HCT116 (cell line): ENCODE measurements at regions of chr10 and their contacts with region 1.

Region 1: GRCh38 chr10:124152916-124153826 is 59.8 kb upstream of the CHST15 start:
- DNase-seq: peak; percentile 100
- ATAC-seq: peak; percentile 80
- H3K4me3 ChIP-seq: peak overlapping the region; percentile 45 to 57
- H3K27ac ChIP-seq: peak overlapping the region; percentile 94
- H3K4me1 ChIP-seq: peaks cover 50 to 66% of the 10 kb centered on the region in 2 experiments
- H3K27me3 ChIP-seq: no peaks in the 10 kb centered on the region
- CTCF ChIP-seq: no peak
- POLR2A ChIP-seq: no peak
- RAD21 ChIP-seq: no peak

Region 2: GRCh38 chr10:123986742-123987141 is 166.4 kb before region 1 on chr10:
- CTCF ChIA-PET with region 1: no interaction called
- POLR2A ChIA-PET with region 1: no interaction called
- RAD21 ChIA-PET with region 1: no interaction called
- intact Hi-C with region 1: no loop called
- DNase-seq: no peak
- ATAC-seq: no peak
- H3K4me3 ChIP-seq: no peak overlapping the region
- H3K27ac ChIP-seq: no peak overlapping the region
- H3K4me1 ChIP-seq: no peaks in the 10 kb centered on the region
- H3K27me3 ChIP-seq: no peaks in the 10 kb centered on the region
- CTCF ChIP-seq: no peak
- POLR2A ChIP-seq: no peak
- RAD21 ChIP-seq: no peak

Region 3: DNA sequence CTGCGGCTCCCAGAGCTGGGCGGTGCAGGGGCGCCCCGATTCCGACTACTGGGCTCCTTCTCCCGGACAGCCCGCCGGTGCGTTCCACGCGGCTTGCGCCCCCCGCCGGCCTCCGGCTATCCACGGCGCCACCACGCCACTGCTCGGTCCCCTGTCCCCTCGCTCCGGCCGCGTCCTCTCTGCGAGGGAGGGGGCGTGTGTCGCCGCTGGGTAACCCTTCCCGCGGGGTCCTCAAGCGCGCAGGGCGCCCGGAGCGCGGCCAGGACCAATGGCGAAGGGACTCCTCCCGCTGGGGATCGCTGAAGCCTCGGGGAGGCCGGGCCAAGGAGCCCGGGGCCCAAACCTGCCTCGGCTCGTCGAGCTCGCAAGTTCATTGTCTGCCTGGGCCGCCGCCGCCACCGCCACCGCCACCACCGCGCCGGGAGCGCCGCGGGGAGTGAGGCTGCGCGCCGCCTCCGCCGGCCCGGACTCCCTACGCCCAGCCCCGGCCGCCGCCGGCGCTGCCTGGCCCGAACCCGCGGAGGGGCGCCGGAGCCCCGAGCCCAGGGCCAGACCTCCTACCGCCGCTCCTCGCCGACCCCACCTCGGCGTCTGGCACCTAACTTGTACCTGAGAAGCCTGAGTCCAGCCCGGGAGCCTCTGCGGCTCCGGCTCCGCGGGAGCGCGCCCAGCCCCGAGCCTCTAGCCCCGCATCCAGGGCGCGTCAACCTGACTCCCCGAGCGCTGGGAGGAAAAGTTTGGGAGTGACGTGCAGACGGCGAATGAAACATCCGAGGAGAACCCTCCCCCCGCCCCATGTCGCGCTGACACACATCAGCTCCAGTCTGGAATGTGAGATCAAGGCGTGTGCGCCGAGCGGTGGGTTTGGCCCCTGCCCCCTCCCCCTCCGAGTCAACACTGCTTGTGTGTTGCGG is 60.1 kb before region 1 on chr10 and contains the start of gene CHST15:
- CTCF ChIA-PET with region 1: interaction called, 4 read pairs
- POLR2A ChIA-PET with region 1: interaction called, 6 read pairs
- RAD21 ChIA-PET with region 1: no interaction called
- intact Hi-C with region 1: loop called (anchors 2 kb)
- DNase-seq: peak; percentile 74
- ATAC-seq: peak; percentile 55
- H3K4me3 ChIP-seq: peak within 1 kb of the TSS; percentile 80 to 82
- H3K27ac ChIP-seq: peak within 1 kb of the TSS; percentile 93
- H3K4me1 ChIP-seq: peaks cover 25 to 44% of the 10 kb centered on the region in 2 experiments
- H3K27me3 ChIP-seq: no peaks in the 10 kb centered on the region
- CTCF ChIP-seq: peak in 1 of 3 experiments; percentile 18; a peak in 1 of 6 replicates
- POLR2A ChIP-seq: peak; percentile 46
- RAD21 ChIP-seq: no peak
- total RNA-seq, gene CHST15: 47.2 TPM

Region 4: DNA sequence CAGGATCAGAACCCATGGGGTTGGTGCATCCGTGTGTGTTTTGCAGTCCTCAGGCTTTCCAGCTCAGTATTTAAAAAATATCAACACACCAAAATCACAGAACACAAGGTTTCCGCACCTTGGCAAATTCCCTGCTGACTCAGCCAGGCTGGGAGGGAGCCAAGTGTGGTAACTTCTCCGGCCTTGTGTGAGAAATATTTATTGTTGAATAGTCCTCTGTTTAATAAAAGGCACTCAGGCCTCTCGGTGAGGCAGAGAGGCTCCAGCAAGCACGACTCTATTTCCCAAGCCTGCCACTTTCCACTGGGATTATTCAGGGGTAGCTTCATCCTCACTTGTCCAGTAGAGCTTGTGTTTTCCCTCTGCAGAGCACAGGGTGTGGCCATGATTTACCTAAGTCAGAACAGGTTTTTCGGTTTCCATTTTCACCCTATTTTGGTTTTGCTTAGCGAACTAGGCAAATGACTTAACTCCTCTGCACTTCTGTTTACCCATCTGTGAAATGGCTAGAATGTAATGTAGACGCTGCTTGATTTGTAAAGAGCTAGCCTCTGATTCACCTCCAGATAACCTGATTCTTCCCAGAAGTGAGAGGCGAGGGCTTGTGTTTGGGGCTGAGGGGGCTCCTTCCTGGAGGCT is 46.8 kb before region 1 on chr10:
- CTCF ChIA-PET with region 1: no interaction called
- POLR2A ChIA-PET with region 1: interaction called, 14 read pairs
- RAD21 ChIA-PET with region 1: no interaction called
- intact Hi-C with region 1: loop called (anchors 2 kb)
- DNase-seq: peak; percentile 48
- ATAC-seq: peak; percentile 71
- H3K4me3 ChIP-seq: peak overlapping the region in 1 of 2 experiments; percentile 36; a peak in 2 of 4 replicates
- H3K27ac ChIP-seq: peak overlapping the region; percentile 57
- H3K4me1 ChIP-seq: peaks cover 25 to 30% of the 10 kb centered on the region in 2 experiments
- H3K27me3 ChIP-seq: no peaks in the 10 kb centered on the region
- CTCF ChIP-seq: no peak
- POLR2A ChIP-seq: no peak
- RAD21 ChIP-seq: peak; percentile 6; the same call in 1 of the 2 replicates

Region 5: DNA sequence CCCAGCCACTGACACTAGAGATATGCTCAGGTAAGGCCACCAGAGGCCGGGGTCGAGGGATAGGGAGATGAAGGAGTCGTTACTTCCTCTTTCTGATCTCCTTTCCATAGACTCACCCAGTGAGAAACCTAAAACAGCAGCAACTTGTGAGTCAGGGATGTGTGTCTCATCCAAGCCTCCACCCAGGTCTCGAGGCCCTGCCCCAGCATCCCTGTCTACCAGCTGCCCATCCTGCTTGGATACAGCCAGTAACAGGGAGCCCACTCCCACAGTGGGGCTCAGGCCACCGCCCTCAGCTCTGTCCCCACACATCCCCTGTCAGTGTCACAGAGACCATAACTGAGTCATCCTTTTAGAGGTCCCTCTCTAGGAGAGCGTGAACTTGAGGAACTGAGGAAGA is 10.2 kb before region 1 on chr10:
- CTCF ChIA-PET with region 1: no interaction called
- POLR2A ChIA-PET with region 1: interaction called, 14 read pairs
- RAD21 ChIA-PET with region 1: no interaction called
- intact Hi-C with region 1: no loop called
- DNase-seq: no peak
- ATAC-seq: no peak
- H3K4me3 ChIP-seq: no peak overlapping the region
- H3K27ac ChIP-seq: no peak overlapping the region
- H3K4me1 ChIP-seq: no peaks in the 10 kb centered on the region
- H3K27me3 ChIP-seq: no peaks in the 10 kb centered on the region
- CTCF ChIP-seq: no peak
- POLR2A ChIP-seq: no peak
- RAD21 ChIP-seq: no peak

Region 6: DNA sequence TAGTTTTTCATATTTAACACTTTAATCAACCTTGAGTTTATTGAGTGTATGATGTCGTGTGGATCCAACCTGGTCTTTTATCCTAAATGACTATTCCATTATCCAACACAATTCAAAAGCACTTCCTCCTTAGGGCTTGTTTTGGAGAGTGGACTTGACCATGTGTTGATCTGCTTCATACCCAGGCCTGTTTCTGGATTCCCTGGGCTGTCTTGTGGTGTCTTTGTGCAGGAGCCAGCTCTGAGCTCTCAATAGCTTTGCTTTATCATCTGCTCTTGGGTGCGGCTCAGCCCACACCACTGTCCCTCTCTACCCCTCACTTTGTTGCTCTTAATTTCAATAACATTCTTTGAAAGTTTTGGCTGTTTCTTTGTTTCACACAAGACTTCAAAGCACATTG is 11.1 kb after region 1 on chr10:
- CTCF ChIA-PET with region 1: no interaction called
- POLR2A ChIA-PET with region 1: no interaction called
- RAD21 ChIA-PET with region 1: no interaction called
- intact Hi-C with region 1: no loop called
- DNase-seq: no peak
- ATAC-seq: no peak
- H3K4me3 ChIP-seq: no peak overlapping the region
- H3K27ac ChIP-seq: no peak overlapping the region
- H3K4me1 ChIP-seq: peaks cover 0 to 4% of the 10 kb centered on the region in 2 experiments; a peak in 1 of 4 replicates
- H3K27me3 ChIP-seq: no peaks in the 10 kb centered on the region
- CTCF ChIP-seq: no peak
- POLR2A ChIP-seq: no peak
- RAD21 ChIP-seq: no peak

Region 7: DNA sequence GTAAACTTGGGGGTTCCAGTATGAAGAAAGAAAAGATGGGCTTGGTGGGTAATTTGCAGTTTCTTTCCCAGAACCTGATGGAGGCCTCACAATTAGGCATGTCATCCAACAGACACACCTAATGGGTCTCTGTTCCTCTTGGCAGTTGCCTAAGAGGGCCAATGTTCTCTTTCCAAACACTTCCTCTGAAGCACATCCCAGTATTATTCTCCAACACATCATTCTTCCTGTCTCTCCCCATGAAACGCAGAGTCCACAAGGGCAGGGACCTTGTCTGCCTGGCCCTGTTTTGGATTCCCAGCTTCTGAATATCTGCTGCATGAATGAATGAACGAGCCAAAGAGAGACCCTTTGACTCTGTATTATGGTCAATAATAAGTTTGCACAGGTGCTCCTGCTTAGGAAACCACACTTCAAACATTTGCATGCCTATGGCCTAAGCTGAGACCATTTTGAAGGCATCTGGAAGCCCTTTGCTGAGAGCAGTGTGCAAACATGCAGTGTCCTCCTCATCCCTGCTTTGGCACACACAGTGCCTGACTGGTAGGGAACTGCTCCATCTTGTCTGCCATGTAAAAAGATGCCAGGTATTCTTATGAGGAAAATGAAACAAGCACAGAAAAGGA is 41.1 kb after region 1 on chr10:
- CTCF ChIA-PET with region 1: interaction called, 20 read pairs
- POLR2A ChIA-PET with region 1: interaction called, 11 read pairs
- RAD21 ChIA-PET with region 1: no interaction called
- intact Hi-C with region 1: no loop called
- DNase-seq: no peak
- ATAC-seq: no peak
- H3K4me3 ChIP-seq: peak overlapping the region in 1 of 2 experiments; percentile 66; a peak in 1 of 4 replicates
- H3K27ac ChIP-seq: no peak overlapping the region
- H3K4me1 ChIP-seq: peaks cover 0 to 15% of the 10 kb centered on the region in 2 experiments; a peak in 1 of 4 replicates
- H3K27me3 ChIP-seq: no peaks in the 10 kb centered on the region
- CTCF ChIP-seq: no peak
- POLR2A ChIP-seq: no peak
- RAD21 ChIP-seq: no peak

Region 8: DNA sequence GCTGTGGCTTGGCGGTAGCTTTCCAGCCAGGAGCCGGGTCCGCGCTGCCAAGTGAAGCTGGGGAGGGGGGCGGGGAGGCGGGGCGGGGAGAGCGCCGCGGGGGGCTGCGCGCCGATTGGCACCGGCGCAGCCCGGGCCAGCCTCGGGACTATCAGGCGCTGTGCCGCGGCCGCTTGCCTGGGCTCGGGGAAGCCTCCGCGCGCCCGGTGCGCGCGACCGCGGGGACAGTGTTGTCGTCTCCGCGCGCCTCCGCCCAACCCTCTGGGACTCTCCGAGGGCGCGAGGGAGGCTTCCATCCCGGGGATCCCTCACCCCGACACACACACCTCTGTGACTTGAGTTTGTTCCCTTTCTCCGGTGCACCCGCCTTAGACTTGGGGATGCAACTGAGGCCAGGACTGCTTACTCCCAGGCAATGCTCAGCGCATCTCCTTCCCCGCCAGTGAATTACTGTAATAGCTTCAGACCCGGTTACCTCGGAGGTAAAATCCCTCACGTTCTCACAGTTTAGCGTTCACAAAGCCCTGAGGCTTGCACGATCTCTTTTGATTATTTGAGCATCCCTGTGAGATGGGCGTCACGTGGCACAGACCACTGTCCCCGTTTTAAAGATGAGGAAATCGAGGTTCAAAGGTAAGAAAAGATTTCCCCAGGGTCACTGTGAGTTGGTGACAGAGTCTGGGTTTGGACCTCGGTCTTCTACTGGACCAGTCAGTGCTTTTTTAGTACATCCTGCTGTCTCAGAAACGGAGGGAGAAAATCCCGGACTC is 297.0 kb after region 1 on chr10 and contains the start of gene NKX1-2:
- CTCF ChIA-PET with region 1: no interaction called
- POLR2A ChIA-PET with region 1: no interaction called
- RAD21 ChIA-PET with region 1: no interaction called
- intact Hi-C with region 1: no loop called
- DNase-seq: peak; percentile 18
- ATAC-seq: peak; percentile 86
- H3K4me3 ChIP-seq: peak within 1 kb of the TSS; percentile 47 to 64
- H3K27ac ChIP-seq: peak within 1 kb of the TSS; percentile 15; the same call in 1 of the 2 replicates
- H3K4me1 ChIP-seq: peaks cover 11 to 19% of the 10 kb centered on the region in 2 experiments
- H3K27me3 ChIP-seq: no peaks in the 10 kb centered on the region; the same call in 1 of the 2 replicates
- CTCF ChIP-seq: no peak
- POLR2A ChIP-seq: no peak
- RAD21 ChIP-seq: no peak
- total RNA-seq, gene NKX1-2: 3.4 TPM